GM13977 (cell line): ENCODE measurements at regions of chr5 and their contacts with region 1.

Region 1: DNA sequence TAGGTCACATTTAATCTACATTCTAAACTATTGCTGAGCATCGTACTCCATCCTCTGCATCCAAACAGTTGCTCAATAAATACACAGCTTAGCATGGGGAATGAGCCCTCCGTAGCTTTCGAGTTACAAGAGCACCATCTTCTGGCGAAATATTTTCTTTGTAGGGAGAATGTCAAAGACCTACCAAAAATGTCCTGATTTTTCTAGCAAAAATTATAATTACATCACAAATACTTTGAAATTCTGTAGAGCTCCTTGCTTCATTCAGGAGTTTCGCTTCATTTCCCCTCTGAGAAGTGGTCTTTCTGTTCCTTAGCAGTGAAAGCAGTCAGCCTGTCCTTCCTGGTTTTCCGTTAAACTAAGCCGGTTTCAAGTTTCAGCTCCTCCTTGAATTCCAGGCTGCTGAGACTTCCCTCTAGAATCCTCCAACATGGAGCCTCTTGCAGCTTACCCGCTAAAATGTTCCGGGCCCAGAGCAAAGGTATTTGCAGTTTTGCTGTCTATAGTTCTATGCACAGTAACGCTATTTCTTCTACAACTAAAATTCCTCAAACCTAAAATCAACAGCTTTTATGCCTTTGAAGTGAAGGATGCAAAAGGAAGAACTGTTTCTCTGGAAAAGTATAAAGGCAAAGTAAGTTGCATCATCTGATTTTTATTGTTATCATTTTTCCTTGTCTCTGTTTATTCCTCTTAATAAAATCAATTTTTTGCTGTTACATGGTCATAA is at the start of gene GPX8:
- DNase-seq: peak; percentile 20
- CTCF ChIP-seq: peak; percentile 50

Region 2: DNA sequence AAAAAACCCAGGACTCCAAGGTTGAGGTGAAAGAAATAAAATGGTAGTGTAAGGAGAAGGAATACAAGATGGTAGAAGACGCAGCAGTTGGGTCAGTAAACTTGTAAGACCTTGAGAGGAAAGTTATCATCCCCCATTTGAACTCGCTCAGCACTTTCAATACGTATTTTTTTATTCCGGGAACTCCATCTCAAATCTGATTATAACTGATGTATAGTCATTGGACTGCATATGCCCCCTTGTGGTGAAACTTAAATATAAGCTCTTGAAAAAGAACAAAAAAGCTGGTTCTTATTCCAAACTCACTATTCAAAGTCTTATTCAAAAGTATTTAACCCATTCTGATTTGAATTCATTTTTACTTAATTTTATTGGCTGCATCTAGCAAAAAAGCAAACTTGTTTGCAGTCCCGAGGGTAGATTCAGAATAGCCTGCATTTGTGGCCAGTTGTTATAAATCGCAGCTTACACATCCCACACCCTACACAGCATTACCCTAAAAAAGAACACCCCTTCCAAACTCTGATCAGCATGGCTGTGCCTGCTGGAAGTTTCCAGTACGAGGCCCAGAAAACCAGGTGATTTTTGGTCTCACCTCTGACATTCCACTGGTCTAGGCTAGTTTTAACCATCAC is 292.5 kb before region 1 on chr5:
- in situ Hi-C with region 1: no loop called
- DNase-seq: peak; percentile 56
- CTCF ChIP-seq: peak; percentile 41

Region 3: DNA sequence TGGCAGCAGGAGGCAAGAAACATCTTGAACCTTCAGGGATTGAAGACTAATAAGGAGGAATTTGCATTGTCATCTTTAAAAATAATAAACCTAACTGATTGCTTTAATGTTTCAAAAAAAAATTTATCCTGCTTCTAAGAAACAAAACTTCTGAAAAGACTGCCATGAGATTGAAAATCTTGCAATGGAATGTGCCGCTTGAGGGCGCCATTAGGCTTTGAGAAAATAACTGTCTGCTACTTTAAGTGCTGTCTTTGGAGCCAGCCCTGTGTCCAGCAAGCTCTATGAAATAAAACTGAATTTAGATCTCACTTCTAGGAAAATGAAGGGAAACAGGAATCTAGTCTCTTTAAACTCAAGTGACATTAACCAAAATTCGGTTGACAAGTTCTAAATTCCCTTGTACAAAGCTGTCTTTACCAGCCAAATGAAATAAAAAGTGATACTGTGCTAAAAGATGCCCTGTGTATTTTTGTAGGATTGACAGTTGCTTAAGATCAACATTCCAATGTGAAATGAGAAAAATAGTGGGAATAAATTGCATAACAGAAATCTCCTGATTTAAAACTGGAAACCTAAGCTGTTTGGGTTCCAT is 253.9 kb before region 1 on chr5:
- in situ Hi-C with region 1: loop called (anchors 10 kb)
- DNase-seq: no peak
- CTCF ChIP-seq: peak; percentile 63